ENCODE measurements at regions of chr1 and their contacts with region 1.

Region 1: GRCh38 chr1:169367486-169368405 is at the starts of genes BLZF1 and NME7:
- DNase-seq: peak; percentile 93 to 94
- ATAC-seq: peak; percentile 99
- H3K4me3 ChIP-seq: peak within 1 kb of the TSS; percentile 66 to 90 (median 74)
- H3K27ac ChIP-seq: peak within 1 kb of the TSS; percentile 80 to 89 (median 86)
- H3K4me1 ChIP-seq: peaks cover 15 to 18% of the 10 kb centered on the region in 2 donors
- H3K27me3 ChIP-seq: no peaks in the 10 kb centered on the region
- CTCF ChIP-seq: no peak
- POLR2A ChIP-seq: peak; percentile 43
- total RNA-seq, gene BLZF1: 10.2 to 17.7 (median 14.6) TPM
- total RNA-seq, gene NME7: 3.7 to 8.4 (median 5.5) TPM

Region 2: GRCh38 chr1:169106095-169106920 is 261.4 kb before region 1 on chr1 and contains the start of gene ATP1B1:
- in situ Hi-C with region 1: no loop called
- intact Hi-C with region 1: loop called (anchors 2 kb)
- DNase-seq: peak; percentile 82 to 89
- ATAC-seq: peak; percentile 57 to 64
- H3K4me3 ChIP-seq: peak within 1 kb of the TSS; percentile 65 to 94 (median 77)
- H3K27ac ChIP-seq: peak within 1 kb of the TSS; percentile 93 to 99 (median 96)
- H3K4me1 ChIP-seq: peaks cover 18 to 25% of the 10 kb centered on the region in 2 donors
- H3K27me3 ChIP-seq: no peaks in the 10 kb centered on the region
- CTCF ChIP-seq: peak; percentile 52 to 94 (median 83)
- POLR2A ChIP-seq: peak; percentile 97 to 99
- total RNA-seq, gene ATP1B1: 111 to 377 (median 324) TPM

Region 3: GRCh38 chr1:169468982-169469381 is 101.2 kb after region 1 on chr1:
- in situ Hi-C with region 1: no loop called
- intact Hi-C with region 1: no loop called
- DNase-seq: no peak
- ATAC-seq: no peak
- H3K4me3 ChIP-seq: no peak overlapping the region
- H3K27ac ChIP-seq: no peak overlapping the region
- H3K4me1 ChIP-seq: peaks cover 0 to 4% of the 10 kb centered on the region in 2 donors
- H3K27me3 ChIP-seq: no peaks in the 10 kb centered on the region
- CTCF ChIP-seq: no peak
- POLR2A ChIP-seq: no peak

Region 4: DNA sequence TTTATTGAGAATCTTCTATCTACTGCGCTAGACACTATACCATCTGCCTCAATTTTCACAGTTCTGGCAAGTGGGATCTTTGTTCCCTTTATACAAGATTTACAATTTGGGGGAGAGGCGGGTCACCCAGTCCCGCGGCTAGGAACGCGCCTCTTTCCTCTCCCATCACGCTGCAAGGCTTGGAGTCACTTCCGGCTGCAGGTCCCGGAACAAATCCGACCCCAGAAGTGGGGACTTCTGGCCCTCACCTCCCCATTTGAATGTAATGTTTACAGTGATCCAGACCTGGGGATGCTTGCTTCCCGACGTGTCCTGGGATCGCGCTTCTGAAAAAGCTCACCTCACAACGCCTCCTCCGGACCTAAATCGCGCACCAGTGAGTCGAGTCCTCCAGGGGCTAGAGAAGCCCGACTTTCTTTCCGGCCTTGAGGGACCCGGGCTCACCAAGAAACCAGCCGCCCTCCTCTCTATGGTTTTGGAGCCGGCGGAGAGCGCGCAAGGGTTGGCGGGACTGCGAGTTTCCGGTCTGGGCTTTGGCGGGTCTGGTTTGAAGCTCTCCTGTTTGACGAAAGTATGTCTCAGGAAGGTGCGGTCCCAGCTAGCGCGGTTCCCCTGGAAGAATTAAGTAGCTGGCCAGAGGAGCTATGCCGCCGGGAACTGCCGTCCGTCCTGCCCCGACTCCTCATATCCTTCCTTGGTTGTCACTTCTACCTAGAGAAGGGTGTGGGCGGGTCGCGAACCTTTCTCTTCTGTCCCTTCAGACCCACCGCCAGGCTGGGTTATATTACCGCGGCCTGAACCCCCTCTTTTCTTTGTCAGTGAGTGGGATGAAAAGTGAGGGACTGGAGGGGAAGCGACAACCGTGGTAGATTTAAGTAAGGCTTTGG is 427.0 kb after region 1 on chr1 and contains the start of gene METTL18:
- in situ Hi-C with region 1: no loop called
- intact Hi-C with region 1: loop called (anchors 2 kb)
- DNase-seq: peak; percentile 79 to 86
- ATAC-seq: peak; percentile 100
- H3K4me3 ChIP-seq: peak within 1 kb of the TSS; percentile 75 to 86 (median 80)
- H3K27ac ChIP-seq: peak within 1 kb of the TSS; percentile 87 to 92 (median 91)
- H3K4me1 ChIP-seq: peaks cover 18 to 20% of the 10 kb centered on the region in 2 donors
- H3K27me3 ChIP-seq: no peaks in the 10 kb centered on the region
- CTCF ChIP-seq: peak in 1 of 5 experiments; percentile 11
- POLR2A ChIP-seq: peak in 1 of 2 donors; percentile 27
- total RNA-seq, gene METTL18: 1.1 to 3.6 (median 2.7) TPM

Measured in gastrocnemius medialis (tissue), 4 donors.